ENCODE measurements at regions of chr19 and their contacts with region 1.

Region 1: GRCh38 chr19:1315470-1316231 is 30.0 kb downstream of the EFNA2 start:
- DNase-seq: peak; percentile 55 to 96 (median 72)

Region 2: GRCh38 chr19:1373534-1374249 is 58.0 kb after region 1 on chr19:
- intact Hi-C with region 1: loop called (anchors 1 kb)
- DNase-seq: peak in 4 of 10 donors; percentile 55 to 90 (median 77)